CD14-positive monocyte (primary cell): ENCODE measurements at regions of chr10 and their contacts with region 1.

Region 1: DNA sequence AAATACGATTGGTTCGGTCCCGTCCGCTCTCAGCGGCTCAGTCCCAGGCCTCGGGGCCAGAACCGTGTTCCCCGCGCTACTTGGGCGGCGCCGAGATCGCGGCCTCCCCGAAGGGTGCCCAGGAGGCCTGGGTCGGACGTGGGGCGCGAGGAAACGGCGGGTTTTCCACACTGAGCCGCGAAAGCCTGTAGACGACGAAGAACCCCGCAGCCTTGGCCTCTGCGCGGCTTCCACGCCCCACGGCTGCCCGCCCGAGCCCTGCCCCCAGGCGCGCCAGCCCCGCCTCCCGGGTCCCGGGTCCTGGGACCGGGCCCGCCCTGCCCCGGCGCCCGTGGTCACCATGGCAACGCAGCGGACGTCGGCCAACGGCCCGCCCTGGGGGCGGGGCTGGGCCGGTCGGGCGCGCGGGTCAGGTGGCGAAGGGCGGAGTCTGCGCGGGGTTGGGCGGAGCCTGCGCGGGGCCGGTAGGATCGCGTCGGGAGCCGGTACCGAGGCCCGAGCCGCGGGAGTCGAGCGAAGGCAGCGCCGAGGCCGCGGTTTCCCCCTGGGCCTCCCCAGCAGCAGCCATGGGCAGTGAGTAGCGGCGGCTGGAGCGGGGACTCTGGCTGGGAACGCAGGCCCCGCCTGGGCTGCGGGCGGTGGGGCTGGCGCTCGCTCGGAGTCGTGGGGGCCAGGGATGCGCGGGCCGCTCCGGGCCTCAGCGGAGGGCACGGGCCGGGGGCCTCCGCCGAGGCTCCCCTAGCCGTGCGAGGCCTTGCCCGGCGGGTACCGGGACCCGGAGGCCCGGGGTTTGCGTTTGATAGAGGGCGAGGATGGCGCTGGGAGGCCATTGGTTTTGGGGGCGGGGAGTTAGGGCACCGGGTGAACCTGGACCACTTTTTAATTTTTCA is at the start of gene SEC61A2:
- DNase-seq: peak; percentile 90 to 93 (median 91)
- H3K4me3 ChIP-seq: peak within 1 kb of the TSS; percentile 74 to 91 (median 87)
- H3K4me3 Mint-ChIP-seq: peak within 1 kb of the TSS; percentile 82 to 90
- H3K27ac ChIP-seq: peak within 1 kb of the TSS; percentile 74 to 77
- H3K27ac Mint-ChIP-seq: peak within 1 kb of the TSS; percentile 71 to 88 (median 83)
- H3K4me1 ChIP-seq: peaks cover 12 to 21% of the 10 kb centered on the region in 2 donors
- H3K4me1 Mint-ChIP-seq: peaks cover 12% of the 10 kb centered on the region
- H3K27me3 ChIP-seq: no peaks in the 10 kb centered on the region
- H3K27me3 Mint-ChIP-seq: peaks cover 0 to 3% (median 0%) of the 10 kb centered on the region in 3 donors
- CTCF ChIP-seq: no peak
- polyA plus RNA-seq, gene SEC61A2: 0.30 to 3.4 (median 0.98) TPM

Region 2: GRCh38 chr10:12068449-12069269 is 60.8 kb before region 1 on chr10 and contains the start of gene DHTKD1:
- intact Hi-C with region 1: loop called (anchors 1 to 5 kb)
- DNase-seq: peak; percentile 97 to 98 (median 98)
- H3K4me3 ChIP-seq: peak within 1 kb of the TSS; percentile 83 to 85 (median 83)
- H3K4me3 Mint-ChIP-seq: peak within 1 kb of the TSS; percentile 87 to 91
- H3K27ac ChIP-seq: peak within 1 kb of the TSS; percentile 52 to 78
- H3K27ac Mint-ChIP-seq: peak within 1 kb of the TSS; percentile 79 to 93 (median 89)
- H3K4me1 ChIP-seq: peaks cover 12 to 23% of the 10 kb centered on the region in 2 donors
- H3K4me1 Mint-ChIP-seq: peaks cover 19% of the 10 kb centered on the region
- H3K27me3 ChIP-seq: no peaks in the 10 kb centered on the region
- H3K27me3 Mint-ChIP-seq: peaks cover 0 to 2% (median 0%) of the 10 kb centered on the region in 3 donors
- CTCF ChIP-seq: peak; percentile 34
- polyA plus RNA-seq, gene DHTKD1: 7.0 to 12.1 (median 11.2) TPM

Region 3: GRCh38 chr10:12195603-12196506 is 66.4 kb after region 1 on chr10 and contains the starts of genes CDC123 and NUDT5:
- intact Hi-C with region 1: loop called in 1 of 2 experiments (anchors 5 kb)
- DNase-seq: peak; percentile 72 to 82 (median 79)
- H3K4me3 ChIP-seq: peak within 1 kb of the TSS; percentile 71 to 98 (median 83)
- H3K4me3 Mint-ChIP-seq: peak within 1 kb of the TSS; percentile 98
- H3K27ac ChIP-seq: peak within 1 kb of the TSS; percentile 90 to 91
- H3K27ac Mint-ChIP-seq: peak within 1 kb of the TSS; percentile 97 to 100 (median 99)
- H3K4me1 ChIP-seq: peaks cover 35 to 62% of the 10 kb centered on the region in 2 donors
- H3K4me1 Mint-ChIP-seq: peaks cover 66% of the 10 kb centered on the region
- H3K27me3 ChIP-seq: no peaks in the 10 kb centered on the region
- H3K27me3 Mint-ChIP-seq: no peaks in the 10 kb centered on the region
- CTCF ChIP-seq: no peak
- polyA plus RNA-seq, gene CDC123: 38.2 to 78.7 (median 76.0) TPM
- polyA plus RNA-seq, gene NUDT5: 28.3 to 51.1 (median 43.7) TPM